CD8-positive, alpha-beta memory T cell (primary cell): ENCODE measurements at regions of chr22 and their contacts with region 1.

Region 1: DNA sequence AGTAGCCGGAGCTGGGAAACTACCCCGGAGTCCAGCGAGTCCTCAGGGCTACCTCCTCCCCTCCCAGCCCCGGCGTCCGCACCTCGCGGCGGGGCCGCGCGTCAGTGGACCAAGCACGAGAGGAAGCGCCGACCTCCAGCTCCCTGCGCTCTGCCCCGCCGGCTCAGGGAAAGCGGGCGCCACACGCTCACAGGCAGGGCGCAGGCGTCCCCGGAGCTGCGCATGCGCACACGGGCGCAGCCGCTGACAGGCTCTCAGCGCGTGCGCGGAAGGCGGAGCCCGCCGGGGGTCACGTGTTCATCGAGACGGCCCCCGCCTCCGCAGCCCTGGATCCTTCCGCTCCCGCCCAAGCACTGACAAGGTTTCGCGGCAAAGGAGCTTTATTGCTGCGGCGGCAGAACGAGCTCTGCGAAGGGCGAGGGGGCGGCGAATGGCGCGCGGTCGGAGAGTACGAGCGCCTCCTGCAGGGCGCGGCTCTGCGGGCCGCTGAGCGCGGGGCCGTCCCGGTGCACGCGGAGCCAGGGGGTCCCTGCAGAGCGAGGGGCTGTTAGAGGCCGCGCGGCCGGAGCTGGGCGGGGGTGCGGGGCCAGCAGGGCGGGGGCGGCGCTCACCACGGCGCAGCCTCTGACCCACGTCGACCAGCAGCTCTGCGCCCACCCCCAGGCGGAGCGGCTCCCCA is at the start of gene SCO2:
- DNase-seq: peak; percentile 96 to 99 (median 97)
- H3K4me3 ChIP-seq: peak within 1 kb of the TSS; percentile 64
- H3K4me3 Mint-ChIP-seq: peak within 1 kb of the TSS; percentile 85 to 93 (median 89)
- H3K27ac ChIP-seq: peak within 1 kb of the TSS; percentile 80
- H3K27ac Mint-ChIP-seq: peak within 1 kb of the TSS; percentile 85 to 99 (median 88)
- H3K4me1 ChIP-seq: peaks cover 26% of the 10 kb centered on the region
- H3K4me1 Mint-ChIP-seq: peaks cover 21 to 38% (median 27%) of the 10 kb centered on the region in 3 donors
- H3K27me3 ChIP-seq: no peaks in the 10 kb centered on the region
- H3K27me3 Mint-ChIP-seq: no peaks in the 10 kb centered on the region
- total RNA-seq, gene SCO2: 2.4 to 3.5 TPM

Region 2: GRCh38 chr22:50058906-50059880 is 466.3 kb before region 1 on chr22:
- CTCF ChIA-PET with region 1: no interaction called
- POLR2A ChIA-PET with region 1: no interaction called
- DNase-seq: no peak
- H3K4me3 ChIP-seq: no peak overlapping the region
- H3K4me3 Mint-ChIP-seq: no peak overlapping the region
- H3K27ac ChIP-seq: no peak overlapping the region
- H3K27ac Mint-ChIP-seq: no peak overlapping the region
- H3K4me1 ChIP-seq: no peaks in the 10 kb centered on the region
- H3K4me1 Mint-ChIP-seq: peaks cover 0 to 12% (median 0%) of the 10 kb centered on the region in 3 donors
- H3K27me3 ChIP-seq: peaks cover 4% of the 10 kb centered on the region
- H3K27me3 Mint-ChIP-seq: peaks cover 15 to 39% of the 10 kb centered on the region in 2 donors

Region 3: DNA sequence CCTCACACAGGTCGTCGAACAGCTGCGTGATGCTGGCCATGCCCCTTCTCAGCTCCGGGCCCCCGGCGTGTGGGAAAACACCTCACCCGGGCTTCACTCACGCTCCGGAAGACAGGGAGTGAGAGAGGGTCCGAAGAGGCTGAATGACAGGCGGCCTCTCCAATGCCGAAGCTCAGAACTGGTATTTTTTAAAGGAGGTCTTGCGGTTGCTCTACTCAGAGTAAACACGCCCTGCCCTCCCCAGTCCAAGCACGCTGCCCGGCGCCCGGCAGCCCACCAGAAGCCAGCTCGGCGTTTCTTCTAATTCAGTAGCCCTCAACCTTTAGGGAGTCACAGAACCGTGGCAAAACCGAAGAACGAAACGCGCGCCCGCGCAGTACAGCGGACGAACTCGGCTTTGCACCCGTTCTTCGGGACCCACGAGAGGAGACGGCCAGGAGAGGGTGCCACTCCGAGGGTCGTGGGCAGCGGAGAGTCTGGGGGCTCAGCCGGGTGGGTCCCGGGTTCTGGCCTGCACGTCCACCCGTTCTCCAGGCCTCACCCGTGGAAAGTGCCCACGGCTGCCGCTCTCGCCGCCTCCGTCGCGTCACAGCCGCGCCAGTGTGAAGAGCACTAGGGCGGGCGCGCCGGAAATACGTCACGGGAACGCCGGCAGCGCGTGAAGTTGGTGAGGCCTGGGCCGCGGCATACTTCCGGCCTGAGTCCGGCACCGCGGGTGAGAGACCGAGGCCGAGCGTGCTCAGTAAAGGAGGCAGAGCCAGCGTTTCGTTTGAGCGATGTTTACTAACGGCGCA is 280.9 kb before region 1 on chr22 and contains the start of gene TUBGCP6:
- CTCF ChIA-PET with region 1: interaction called, 13 read pairs
- POLR2A ChIA-PET with region 1: interaction called, 10 read pairs
- DNase-seq: peak; percentile 89 to 92 (median 90)
- H3K4me3 ChIP-seq: peak within 1 kb of the TSS; percentile 77
- H3K4me3 Mint-ChIP-seq: peak within 1 kb of the TSS; percentile 84 to 100 (median 98)
- H3K27ac ChIP-seq: peak within 1 kb of the TSS; percentile 99
- H3K27ac Mint-ChIP-seq: peak within 1 kb of the TSS; percentile 94 to 100 (median 98)
- H3K4me1 ChIP-seq: peaks cover 54% of the 10 kb centered on the region
- H3K4me1 Mint-ChIP-seq: peaks cover 34 to 66% (median 41%) of the 10 kb centered on the region in 3 donors
- H3K27me3 ChIP-seq: no peaks in the 10 kb centered on the region
- H3K27me3 Mint-ChIP-seq: peaks cover 0 to 1% of the 10 kb centered on the region in 2 donors
- total RNA-seq, gene TUBGCP6: 51.4 to 52.2 TPM

Region 4: GRCh38 chr22:50444663-50445062 is 80.9 kb before region 1 on chr22:
- CTCF ChIA-PET with region 1: interaction called, 13 read pairs
- POLR2A ChIA-PET with region 1: interaction called, 5 read pairs
- DNase-seq: no peak
- H3K4me3 ChIP-seq: no peak overlapping the region
- H3K4me3 Mint-ChIP-seq: peak overlapping the region in 4 of 7 donors; percentile 45 to 62 (median 55)
- H3K27ac ChIP-seq: no peak overlapping the region
- H3K27ac Mint-ChIP-seq: peak overlapping the region in 7 of 8 donors; percentile 63 to 95 (median 84)
- H3K4me1 ChIP-seq: peaks cover 19% of the 10 kb centered on the region
- H3K4me1 Mint-ChIP-seq: peaks cover 25 to 40% (median 27%) of the 10 kb centered on the region in 3 donors
- H3K27me3 ChIP-seq: no peaks in the 10 kb centered on the region
- H3K27me3 Mint-ChIP-seq: no peaks in the 10 kb centered on the region

Region 5: GRCh38 chr22:50498322-50498890 is 27.1 kb before region 1 on chr22:
- CTCF ChIA-PET with region 1: interaction called, 18 read pairs
- POLR2A ChIA-PET with region 1: interaction called, 8 read pairs
- DNase-seq: peak; percentile 35 to 81 (median 64)
- H3K4me3 ChIP-seq: no peak overlapping the region
- H3K4me3 Mint-ChIP-seq: no peak overlapping the region
- H3K27ac ChIP-seq: no peak overlapping the region
- H3K27ac Mint-ChIP-seq: peak overlapping the region in 1 of 8 donors; percentile 56
- H3K4me1 ChIP-seq: peaks cover 9% of the 10 kb centered on the region
- H3K4me1 Mint-ChIP-seq: peaks cover 0 to 4% (median 3%) of the 10 kb centered on the region in 3 donors
- H3K27me3 ChIP-seq: no peaks in the 10 kb centered on the region
- H3K27me3 Mint-ChIP-seq: no peaks in the 10 kb centered on the region

Region 6: DNA sequence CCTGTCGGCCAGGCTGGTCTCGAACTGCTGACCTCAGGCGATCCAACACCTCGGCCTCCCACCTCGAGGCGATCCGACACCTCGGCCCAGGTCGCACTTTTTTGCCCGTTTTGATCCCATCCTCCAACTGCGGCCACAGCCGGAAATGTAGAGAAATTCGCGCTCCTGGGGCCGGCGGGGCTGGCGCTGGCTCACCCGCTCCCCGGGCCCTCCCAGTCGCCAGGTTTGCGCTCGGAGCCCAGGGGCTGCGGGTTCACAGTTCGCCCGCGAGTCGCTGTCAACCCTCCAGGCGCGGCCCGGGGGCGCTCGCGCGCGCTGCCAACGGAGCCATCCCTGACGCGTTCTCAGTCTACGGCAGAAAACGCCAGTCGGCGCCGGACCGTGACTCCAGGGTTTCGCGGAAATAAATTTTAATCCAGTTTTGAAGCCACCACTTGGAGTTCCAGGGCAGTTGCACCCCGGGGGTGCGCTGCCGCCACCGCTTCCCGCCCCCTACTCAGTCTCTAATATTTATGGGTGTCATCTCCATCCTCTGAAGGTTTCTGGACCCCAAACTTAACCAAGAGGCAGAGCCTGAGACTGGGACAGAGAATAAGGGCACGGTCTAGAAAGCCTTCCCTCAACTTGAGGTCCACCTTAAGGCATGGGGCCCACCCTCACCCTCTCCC is 18.7 kb after region 1 on chr22:
- CTCF ChIA-PET with region 1: interaction called, 86 read pairs
- POLR2A ChIA-PET with region 1: interaction called, 81 read pairs
- DNase-seq: peak; percentile 72 to 87 (median 78)
- H3K4me3 ChIP-seq: peak overlapping the region; percentile 77
- H3K4me3 Mint-ChIP-seq: peak overlapping the region; percentile 60 to 85 (median 71)
- H3K27ac ChIP-seq: peak overlapping the region; percentile 33
- H3K27ac Mint-ChIP-seq: peak overlapping the region; percentile 74 to 99 (median 91)
- H3K4me1 ChIP-seq: peaks cover 41% of the 10 kb centered on the region
- H3K4me1 Mint-ChIP-seq: peaks cover 39 to 55% (median 44%) of the 10 kb centered on the region in 3 donors
- H3K27me3 ChIP-seq: no peaks in the 10 kb centered on the region
- H3K27me3 Mint-ChIP-seq: no peaks in the 10 kb centered on the region

Region 7: GRCh38 chr22:50582562-50583293 is 57.2 kb after region 1 on chr22 and contains the start of gene CHKB:
- CTCF ChIA-PET with region 1: interaction called, 12 read pairs
- POLR2A ChIA-PET with region 1: interaction called, 12 read pairs
- DNase-seq: peak; percentile 97 to 99 (median 98)
- H3K4me3 ChIP-seq: peak within 1 kb of the TSS; percentile 89
- H3K4me3 Mint-ChIP-seq: peak within 1 kb of the TSS; percentile 88 to 98 (median 94)
- H3K27ac ChIP-seq: peak within 1 kb of the TSS; percentile 94
- H3K27ac Mint-ChIP-seq: peak within 1 kb of the TSS; percentile 88 to 99 (median 96)
- H3K4me1 ChIP-seq: peaks cover 19% of the 10 kb centered on the region
- H3K4me1 Mint-ChIP-seq: peaks cover 11 to 32% (median 17%) of the 10 kb centered on the region in 3 donors
- H3K27me3 ChIP-seq: no peaks in the 10 kb centered on the region
- H3K27me3 Mint-ChIP-seq: no peaks in the 10 kb centered on the region
- total RNA-seq, gene CHKB: 72.1 to 76.1 TPM